ENCODE measurements at regions of chr1 and their contacts with region 1.

Region 1: DNA sequence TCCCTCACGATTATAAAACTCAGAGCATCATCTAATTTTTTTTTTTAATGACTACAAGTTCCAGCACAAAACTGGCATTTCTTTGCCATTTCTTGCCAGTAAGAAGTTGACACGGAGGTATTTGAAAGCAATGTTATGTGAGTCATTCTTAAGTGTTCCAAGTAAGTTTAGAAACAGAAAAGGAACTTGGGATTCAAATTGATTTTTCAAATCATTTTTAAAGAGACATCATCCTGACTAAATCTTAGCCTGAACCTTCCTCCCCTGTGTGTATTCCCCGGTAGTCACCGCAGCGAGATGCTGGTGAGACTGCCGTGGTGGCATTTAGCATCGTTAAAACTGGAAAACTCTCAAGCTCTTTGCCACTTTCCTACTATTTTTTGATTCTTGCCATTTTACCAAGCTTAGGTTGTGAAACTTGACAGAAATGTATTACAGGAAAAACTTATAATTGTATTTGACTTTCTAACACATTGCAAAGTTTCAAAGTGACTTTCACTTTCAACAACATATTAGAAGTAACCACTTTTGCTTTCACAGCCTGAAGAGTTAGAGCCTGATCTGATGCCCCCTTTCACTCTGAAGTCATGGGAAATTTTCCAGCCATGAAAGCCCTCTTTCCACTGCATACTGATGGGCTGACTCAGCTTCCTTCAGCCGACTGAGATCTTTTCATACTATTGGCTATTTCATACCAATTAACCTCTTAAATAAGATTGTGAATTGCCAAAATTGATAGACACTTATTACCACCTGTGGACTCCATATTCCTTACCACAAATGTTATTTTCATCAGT is 61.4 kb downstream of the OLFML2B start:
- DNase-seq: no peak
- H3K4me3 Mint-ChIP-seq: peak overlapping the region; percentile 75
- H3K27ac Mint-ChIP-seq: peak overlapping the region; percentile 89
- H3K4me1 Mint-ChIP-seq: peaks cover 32% of the 10 kb centered on the region
- H3K27me3 Mint-ChIP-seq: no peaks in the 10 kb centered on the region

Region 2: DNA sequence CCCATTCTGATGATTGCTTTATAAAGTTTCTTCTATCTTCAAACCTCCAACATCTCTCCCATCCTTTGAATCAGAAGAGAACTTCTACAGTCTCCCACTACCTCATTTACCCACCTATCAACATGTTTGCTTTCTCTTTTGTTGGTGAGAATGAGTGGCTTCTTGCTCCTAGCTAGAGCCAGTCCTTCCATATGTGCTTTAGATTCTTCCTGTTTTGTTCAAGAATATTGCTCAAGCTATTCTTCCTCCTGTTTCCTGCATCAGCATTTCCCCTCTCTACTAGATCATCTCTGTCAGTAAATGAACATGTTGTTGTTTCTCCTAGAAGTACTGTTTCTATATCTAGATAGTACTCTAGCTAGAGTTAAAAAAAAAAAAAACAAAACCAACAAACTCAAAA is 189.9 kb before region 1 on chr1:
- intact Hi-C with region 1: loop called (anchors 5 kb)
- DNase-seq: no peak
- H3K4me3 Mint-ChIP-seq: no peak overlapping the region
- H3K27ac Mint-ChIP-seq: no peak overlapping the region
- H3K4me1 Mint-ChIP-seq: peaks cover 26% of the 10 kb centered on the region
- H3K27me3 Mint-ChIP-seq: no peaks in the 10 kb centered on the region

Region 3: DNA sequence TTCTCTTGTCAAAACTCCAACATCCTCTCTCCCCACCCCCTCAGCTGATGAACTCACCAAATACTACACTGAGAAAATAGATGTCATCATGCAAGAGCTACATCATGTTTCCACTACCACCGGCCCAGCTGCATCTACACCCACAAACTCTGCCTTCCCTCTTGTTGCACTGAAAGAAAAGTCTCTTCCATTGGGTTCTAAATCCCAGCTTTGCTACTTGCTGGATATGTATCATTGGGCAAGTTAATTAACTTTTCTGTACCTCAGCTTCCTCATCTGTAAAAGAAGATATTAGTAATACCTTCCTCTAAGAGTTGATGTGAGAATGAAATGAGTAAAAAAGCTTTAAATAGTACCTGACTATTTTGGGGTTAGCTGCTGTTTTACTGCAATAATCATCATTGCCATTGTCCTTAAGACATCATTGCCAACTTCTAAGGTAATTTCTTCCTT is 47.2 kb before region 1 on chr1:
- intact Hi-C with region 1: loop called (anchors 5 kb)
- DNase-seq: no peak
- H3K4me3 Mint-ChIP-seq: no peak overlapping the region
- H3K27ac Mint-ChIP-seq: no peak overlapping the region
- H3K4me1 Mint-ChIP-seq: peaks cover 17% of the 10 kb centered on the region
- H3K27me3 Mint-ChIP-seq: no peaks in the 10 kb centered on the region

Region 4: GRCh38 chr1:162023547-162024501 is 61.5 kb after region 1 on chr1 and contains the start of gene OLFML2B:
- intact Hi-C with region 1: loop called (anchors 5 kb)
- DNase-seq: peak; percentile 56
- H3K4me3 Mint-ChIP-seq: peak within 1 kb of the TSS; percentile 89
- H3K27ac Mint-ChIP-seq: no peak within 1 kb of the TSS
- H3K4me1 Mint-ChIP-seq: peaks cover 7% of the 10 kb centered on the region
- H3K27me3 Mint-ChIP-seq: peaks cover 58% of the 10 kb centered on the region
- total RNA-seq, gene OLFML2B: not detected in 2 replicates

Measured in activated T-helper 2 cell treated with anti-CD3 and anti-CD28 coated beads, Interferon-gamma antibody, Interleukin-2, Interleukin-4, amounts not matched to agents 10 μg/mL and 5 μg/mL and 100 μg/mL, durations not matched to agents 14 hours and 24 hours and 36 hours (primary cell).